MCF 10A (cell line): ENCODE measurements at regions of chr6 and their contacts with region 1.

Region 1: DNA sequence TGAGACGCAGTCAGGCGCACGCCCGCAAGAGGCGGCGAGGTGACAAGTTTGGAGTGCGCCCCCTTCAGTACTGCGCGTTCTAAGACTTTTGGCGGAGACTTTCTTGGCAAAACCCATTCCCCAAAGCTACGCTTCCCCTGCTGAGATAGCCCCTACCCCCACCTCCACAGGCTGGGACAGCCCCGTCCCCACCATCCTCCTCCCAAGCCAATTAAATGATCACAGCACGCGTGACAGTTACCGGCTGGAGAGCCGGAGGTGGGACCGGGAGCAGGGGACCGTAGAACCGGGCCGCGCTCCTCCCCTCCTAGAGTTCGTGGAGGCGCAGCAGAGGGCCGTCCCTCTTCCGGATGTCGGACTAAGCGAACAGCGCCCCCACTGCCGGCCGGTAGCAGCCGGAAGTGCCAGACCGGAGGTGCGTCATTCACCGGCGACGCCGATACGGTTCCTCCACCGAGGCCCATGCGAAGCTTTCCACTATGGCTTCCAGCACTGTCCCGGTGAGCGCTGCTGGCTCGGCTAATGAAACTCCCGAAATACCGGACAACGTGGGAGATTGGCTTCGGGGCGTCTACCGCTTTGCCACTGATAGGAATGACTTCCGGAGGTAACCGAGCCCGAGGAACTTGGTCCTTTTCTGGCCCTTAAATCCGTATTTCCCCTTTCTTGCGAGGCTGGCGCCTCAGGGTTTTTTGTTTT is at the start of gene TOMM6:
- DNase-seq: peak; percentile 93
- H3K4me3 Mint-ChIP-seq: peak within 1 kb of the TSS; percentile 88
- H3K27ac Mint-ChIP-seq: peak within 1 kb of the TSS; percentile 96
- H3K4me1 Mint-ChIP-seq: peaks cover 13% of the 10 kb centered on the region
- H3K27me3 Mint-ChIP-seq: no peaks in the 10 kb centered on the region
- CTCF ChIP-seq: peak; percentile 89
- total RNA-seq, gene TOMM6: 202 and 227 TPM in 2 replicates

Region 2: DNA sequence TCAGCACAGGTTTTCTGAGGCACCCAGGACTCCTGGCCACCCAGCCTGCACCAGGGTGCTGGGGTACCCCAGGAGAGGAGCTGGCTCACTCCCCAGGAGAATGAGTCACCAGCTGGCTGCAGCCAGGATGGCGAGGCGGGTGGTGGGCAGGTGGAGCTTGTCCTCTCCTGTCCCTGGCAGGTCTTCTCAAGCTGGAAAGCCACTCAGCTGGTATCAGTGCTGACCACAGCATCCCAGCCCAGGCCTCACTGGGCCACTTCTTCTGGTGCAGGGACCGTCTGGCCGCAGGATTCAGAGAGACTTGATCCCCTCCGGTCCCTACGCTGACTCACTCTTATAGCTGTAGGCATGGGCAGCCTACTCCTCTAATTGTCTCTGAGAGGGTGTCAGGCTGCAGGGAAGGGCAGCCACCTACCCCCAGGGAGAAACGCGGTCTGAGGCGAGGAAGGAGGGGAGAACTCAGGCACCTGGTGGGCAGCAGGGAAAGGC is 74.2 kb before region 1 on chr6:
- CTCF ChIA-PET with region 1: interaction called, 6 read pairs
- POLR2A ChIA-PET with region 1: interaction called, 10 read pairs
- intact Hi-C with region 1: no loop called
- DNase-seq: peak; percentile 94
- H3K4me3 Mint-ChIP-seq: peak overlapping the region; percentile 7
- H3K27ac Mint-ChIP-seq: peak overlapping the region; percentile 35
- H3K4me1 Mint-ChIP-seq: peaks cover 45% of the 10 kb centered on the region
- H3K27me3 Mint-ChIP-seq: no peaks in the 10 kb centered on the region
- CTCF ChIP-seq: no peak

Region 3: GRCh38 chr6:41801380-41801779 is 14.0 kb after region 1 on chr6:
- CTCF ChIA-PET with region 1: interaction called, 11 read pairs
- POLR2A ChIA-PET with region 1: interaction called, 10 read pairs
- intact Hi-C with region 1: no loop called
- DNase-seq: peak; percentile 44
- H3K4me3 Mint-ChIP-seq: no peak overlapping the region
- H3K27ac Mint-ChIP-seq: no peak overlapping the region
- H3K4me1 Mint-ChIP-seq: peaks cover 5% of the 10 kb centered on the region
- H3K27me3 Mint-ChIP-seq: no peaks in the 10 kb centered on the region
- CTCF ChIP-seq: peak; percentile 55

Region 4: GRCh38 chr6:41936073-41936837 is 148.9 kb after region 1 on chr6:
- CTCF ChIA-PET with region 1: interaction called, 4 read pairs
- POLR2A ChIA-PET with region 1: interaction called, 7 read pairs
- intact Hi-C with region 1: loop called (anchors 5 kb)
- DNase-seq: peak; percentile 93
- H3K4me3 Mint-ChIP-seq: no peak overlapping the region
- H3K27ac Mint-ChIP-seq: peak overlapping the region; percentile 25
- H3K4me1 Mint-ChIP-seq: peaks cover 31% of the 10 kb centered on the region
- H3K27me3 Mint-ChIP-seq: no peaks in the 10 kb centered on the region
- CTCF ChIP-seq: peak; percentile 76

Region 5: GRCh38 chr6:42050266-42051032 is 263.1 kb after region 1 on chr6 and contains the start of gene TAF8:
- CTCF ChIA-PET with region 1: interaction called, 29 read pairs
- POLR2A ChIA-PET with region 1: interaction called, 100 read pairs
- intact Hi-C with region 1: no loop called
- DNase-seq: peak; percentile 93
- H3K4me3 Mint-ChIP-seq: peak within 1 kb of the TSS; percentile 91
- H3K27ac Mint-ChIP-seq: peak within 1 kb of the TSS; percentile 94
- H3K4me1 Mint-ChIP-seq: peaks cover 22% of the 10 kb centered on the region
- H3K27me3 Mint-ChIP-seq: no peaks in the 10 kb centered on the region
- CTCF ChIP-seq: no peak
- total RNA-seq, gene TAF8: 23.8 and 25.8 TPM in 2 replicates